ENCODE measurements at regions of chr1 and their contacts with region 1.

Region 1: DNA sequence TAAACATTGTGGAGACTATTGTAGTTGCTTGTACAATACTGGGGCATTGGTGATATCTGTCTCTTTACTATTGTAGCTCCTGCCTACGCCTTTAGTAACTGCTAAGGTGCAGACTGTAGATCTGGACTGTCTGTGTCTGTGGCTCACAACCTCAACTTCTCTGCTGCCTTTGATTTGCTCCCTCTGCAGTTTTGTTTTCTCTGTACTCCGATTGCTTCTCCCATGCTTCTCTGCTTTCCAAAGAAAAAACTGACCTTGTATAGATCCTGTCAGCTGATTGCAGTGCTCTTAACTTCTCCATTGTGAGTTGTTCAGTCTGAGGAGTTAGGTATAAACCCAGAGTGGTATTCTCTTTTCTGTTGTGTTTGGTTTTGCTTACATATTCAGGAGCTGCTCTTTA is 15.3 kb downstream of the MAGI3 start:
- DNase-seq: no peak
- H3K4me3 ChIP-seq: no peak overlapping the region
- H3K27ac ChIP-seq: no peak overlapping the region
- H3K4me1 ChIP-seq: peaks cover 0 to 34% (median 6%) of the 10 kb centered on the region in 4 donors
- H3K27me3 ChIP-seq: no peaks in the 10 kb centered on the region
- CTCF ChIP-seq: no peak
- EP300 ChIP-seq: no peak
- POLR2A ChIP-seq: no peak

Region 2: DNA sequence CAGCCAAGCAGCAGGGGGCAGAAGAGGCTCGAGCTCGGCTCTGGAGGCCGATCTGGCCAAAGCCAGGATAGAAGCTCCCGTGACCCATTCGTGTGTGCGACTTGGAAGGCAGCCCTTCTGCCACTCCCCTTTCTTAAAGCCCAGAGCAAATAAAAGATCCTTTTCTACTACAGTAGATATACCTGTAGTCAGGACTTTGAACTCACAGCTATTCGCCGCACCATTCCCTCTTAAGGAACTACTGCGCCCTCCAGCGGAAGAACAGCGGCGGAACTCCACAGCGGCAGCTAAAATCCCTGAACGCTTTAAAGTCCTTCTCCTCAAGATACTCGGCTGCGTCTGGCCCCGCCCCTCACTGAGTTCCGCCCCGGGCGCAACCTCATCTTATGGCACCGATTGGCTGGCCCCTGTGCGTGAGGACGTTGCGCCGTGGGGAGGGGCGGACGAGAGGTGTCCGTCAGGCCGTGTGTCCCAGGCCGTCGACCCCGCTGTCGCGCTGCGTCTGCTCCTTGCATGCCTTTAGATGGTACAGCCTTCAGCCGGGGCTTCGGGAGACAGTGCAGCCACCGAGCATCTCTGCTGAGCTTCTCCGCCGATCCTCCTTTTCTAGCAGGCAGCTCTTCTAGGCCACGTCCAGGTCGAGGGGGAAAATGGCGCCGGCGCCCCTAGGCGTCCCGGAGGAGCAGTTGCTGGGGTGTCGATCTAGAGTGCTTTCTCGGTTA is 332.7 kb before region 1 on chr1 and contains the start of gene LRIG2:
- intact Hi-C with region 1: loop called (anchors 10 kb)
- DNase-seq: peak; percentile 99
- H3K4me3 ChIP-seq: peak within 1 kb of the TSS; percentile 66 to 94 (median 80)
- H3K27ac ChIP-seq: peak within 1 kb of the TSS; percentile 92 to 98 (median 94)
- H3K4me1 ChIP-seq: peaks cover 0 to 39% (median 30%) of the 10 kb centered on the region in 4 donors
- H3K27me3 ChIP-seq: no peaks in the 10 kb centered on the region
- CTCF ChIP-seq: peak; percentile 80 to 95 (median 89)
- EP300 ChIP-seq: no peak
- POLR2A ChIP-seq: peak; percentile 85 to 96
- total RNA-seq, gene LRIG2: 14.1 to 24.2 (median 17.4) TPM

Measured in sigmoid colon (tissue), 7 donors.